HepG2 (cell line): ENCODE measurements at regions of chr17 and their contacts with region 1.

Region 1: DNA sequence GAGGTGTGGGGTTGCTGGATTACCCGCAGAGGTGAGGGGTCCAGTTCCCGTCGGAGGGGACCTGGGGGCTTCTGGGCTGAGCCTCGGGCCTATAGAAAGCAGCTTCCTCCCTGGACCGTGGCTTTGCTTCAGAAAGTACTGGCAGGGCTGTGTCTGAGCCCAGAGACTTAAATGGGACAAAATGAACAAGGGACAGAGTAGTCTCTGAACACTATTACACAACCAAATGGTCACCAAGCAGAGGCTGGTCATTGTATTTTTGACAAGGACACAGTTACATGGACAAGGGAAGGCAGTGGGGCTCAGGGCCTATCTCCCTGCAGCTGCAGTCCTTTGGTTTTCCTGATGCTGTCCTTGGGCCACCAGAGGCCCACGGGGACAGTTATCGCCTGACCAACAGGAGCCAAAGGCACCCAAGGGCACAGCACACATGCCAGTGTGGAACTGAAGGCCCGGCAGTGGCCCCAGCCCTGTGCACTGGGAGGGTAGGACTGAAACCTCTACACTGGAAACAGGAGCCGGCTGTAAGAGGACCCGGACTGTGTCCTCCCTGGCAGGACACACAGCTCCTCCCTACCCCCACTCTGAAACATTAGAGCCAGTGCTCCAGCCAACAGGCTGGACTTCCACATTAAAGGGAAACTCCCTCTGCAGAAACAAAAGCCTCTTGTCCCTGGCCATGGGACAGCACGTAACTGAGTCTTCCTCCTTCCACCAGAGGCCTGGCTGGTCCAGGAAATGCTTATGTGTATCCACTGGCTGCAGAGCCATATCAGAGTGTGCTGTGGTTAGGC is 26.0 kb upstream of the ERN1 start:
- DNase-seq: peak; percentile 98
- ATAC-seq: peak; percentile 94
- H3K4me3 ChIP-seq: peak overlapping the region; percentile 4 to 64 (median 6); a peak in 4 of 6 replicates
- H3K27ac ChIP-seq: peak overlapping the region; percentile 88
- H3K4me1 ChIP-seq: peaks cover 79% of the 10 kb centered on the region
- H3K27me3 ChIP-seq: no peaks in the 10 kb centered on the region
- CTCF ChIP-seq: peak; percentile 45
- EP300 ChIP-seq: peak in 1 of 2 experiments; percentile 59; a peak in 2 of 4 replicates
- POLR2A ChIP-seq: peak; percentile 70 to 86
- RAD21 ChIP-seq: peak; percentile 67; the same call in 1 of the 2 replicates

Region 2: DNA sequence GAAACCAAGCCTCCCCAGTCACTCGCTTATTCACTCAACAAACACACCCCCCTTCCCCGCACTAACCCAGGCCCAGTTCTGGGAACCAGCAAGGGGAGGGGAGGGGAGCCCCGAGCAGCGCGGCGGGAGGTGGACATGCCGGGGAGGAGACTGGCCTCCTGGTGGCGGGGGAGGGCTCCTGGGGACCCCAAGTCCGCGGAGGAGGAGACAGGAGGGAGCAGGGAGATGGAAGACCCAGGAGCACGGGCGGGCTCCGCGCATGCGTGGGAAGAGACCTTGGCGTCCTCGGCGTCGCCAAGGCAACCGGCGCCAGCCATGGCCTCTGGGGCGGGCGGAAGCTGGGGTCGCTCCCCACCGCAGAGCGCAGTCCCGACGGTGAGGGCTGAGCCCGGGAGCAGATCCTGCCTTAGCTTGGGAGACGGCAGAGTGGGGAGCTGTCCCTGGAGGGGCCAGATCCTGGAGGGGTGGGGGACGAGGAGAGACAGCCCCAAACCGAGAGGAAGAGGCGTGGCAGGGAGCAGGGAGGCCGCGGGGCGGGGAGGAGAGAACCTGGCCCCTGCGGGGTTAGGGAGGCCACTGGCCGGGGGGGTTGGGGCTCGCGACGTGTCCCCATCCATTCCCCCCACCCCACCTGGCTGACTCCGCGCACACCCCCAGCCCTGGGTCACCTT is 157.8 kb before region 1 on chr17 and contains the start of gene PRR29:
- CTCF ChIA-PET with region 1: no interaction called
- POLR2A ChIA-PET with region 1: no interaction called
- in situ Hi-C with region 1: no loop called
- intact Hi-C with region 1: no loop called
- DNase-seq: peak; percentile 66
- ATAC-seq: peak; percentile 76
- H3K4me3 ChIP-seq: peak within 1 kb of the TSS; percentile 67 to 87 (median 79)
- H3K27ac ChIP-seq: no peak within 1 kb of the TSS
- H3K4me1 ChIP-seq: peaks cover 49% of the 10 kb centered on the region
- H3K27me3 ChIP-seq: peaks cover 10 to 37% of the 10 kb centered on the region in 2 experiments; a peak in 4 of 5 replicates
- CTCF ChIP-seq: 0 out of 2 replicates have a peak, but pooled peaks have one; percentile 11
- EP300 ChIP-seq: no peak
- POLR2A ChIP-seq: no peak
- RAD21 ChIP-seq: no peak
- total RNA-seq, gene PRR29: 0.07 and 0.11 TPM in 2 replicates

Region 3: DNA sequence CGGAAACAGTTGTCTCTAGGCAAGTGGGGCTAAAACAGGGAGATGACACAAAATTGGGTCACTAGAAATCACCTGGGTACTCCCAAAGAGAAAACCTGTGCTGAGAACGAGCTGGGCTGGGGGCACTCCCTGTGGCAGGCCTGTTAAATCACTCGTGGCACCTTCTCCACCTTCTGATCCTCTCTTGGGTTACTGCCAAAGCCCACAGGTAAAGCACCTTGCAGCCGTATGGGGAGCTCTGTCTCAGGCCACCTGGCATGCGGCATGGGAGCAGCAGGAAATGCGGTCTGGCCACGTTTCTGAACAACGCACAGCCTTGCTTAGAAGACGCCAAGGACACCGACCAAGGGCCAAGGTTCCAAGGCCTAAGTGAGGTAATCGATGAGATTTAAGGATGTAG is 114.0 kb before region 1 on chr17:
- CTCF ChIA-PET with region 1: no interaction called
- POLR2A ChIA-PET with region 1: no interaction called
- in situ Hi-C with region 1: no loop called
- intact Hi-C with region 1: no loop called
- DNase-seq: no peak
- ATAC-seq: no peak
- H3K4me3 ChIP-seq: no peak overlapping the region
- H3K27ac ChIP-seq: no peak overlapping the region
- H3K4me1 ChIP-seq: no peaks in the 10 kb centered on the region
- H3K27me3 ChIP-seq: no peaks in the 10 kb centered on the region
- CTCF ChIP-seq: no peak
- EP300 ChIP-seq: no peak
- POLR2A ChIP-seq: no peak
- RAD21 ChIP-seq: no peak

Region 4: DNA sequence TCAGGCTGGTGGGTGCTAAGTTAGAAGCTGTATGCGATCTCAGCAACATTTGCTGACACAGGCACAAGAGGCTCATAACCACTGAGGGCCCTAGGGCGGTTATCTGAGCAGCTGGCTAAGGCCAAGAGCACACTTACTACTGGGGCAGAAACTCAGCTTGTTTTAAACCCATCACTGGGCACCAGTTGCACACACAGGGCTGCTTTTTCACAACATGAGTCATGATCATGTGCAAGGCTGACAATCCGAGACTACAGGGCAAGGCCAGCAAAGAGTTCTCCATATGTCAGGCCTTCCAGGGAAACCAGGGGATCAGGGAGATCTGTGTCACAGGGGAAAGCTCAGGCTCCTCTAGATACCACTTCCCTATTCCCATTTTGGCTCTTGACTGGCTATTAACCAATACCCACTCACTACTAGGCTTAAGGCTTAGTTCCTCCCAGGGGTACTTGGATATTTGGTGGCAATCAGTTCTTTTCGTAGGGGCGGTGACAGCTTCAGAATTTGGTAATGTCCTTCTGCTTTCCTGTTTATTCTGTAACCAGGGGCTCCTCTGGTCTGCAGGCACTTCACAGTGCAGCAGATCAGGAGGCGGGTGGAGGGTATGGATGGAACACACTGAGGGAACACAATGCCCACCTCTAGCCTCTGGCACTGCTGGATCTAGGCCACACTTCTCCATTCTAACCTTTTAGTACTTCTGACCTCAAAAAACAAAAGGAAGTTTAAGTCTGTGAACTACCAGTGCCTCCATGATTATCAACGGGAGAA is 18.9 kb after region 1 on chr17:
- CTCF ChIA-PET with region 1: no interaction called
- POLR2A ChIA-PET with region 1: interaction called, 21 read pairs
- in situ Hi-C with region 1: no loop called
- intact Hi-C with region 1: loop called (anchors 2 kb)
- DNase-seq: no peak
- ATAC-seq: no peak
- H3K4me3 ChIP-seq: no peak overlapping the region
- H3K27ac ChIP-seq: no peak overlapping the region
- H3K4me1 ChIP-seq: peaks cover 37% of the 10 kb centered on the region
- H3K27me3 ChIP-seq: no peaks in the 10 kb centered on the region
- CTCF ChIP-seq: no peak
- EP300 ChIP-seq: no peak
- POLR2A ChIP-seq: no peak
- RAD21 ChIP-seq: no peak

Region 5: GRCh38 chr17:64496786-64497564 is 341.0 kb after region 1 on chr17 and contains the start of gene POLG2:
- CTCF ChIA-PET with region 1: no interaction called
- POLR2A ChIA-PET with region 1: no interaction called
- in situ Hi-C with region 1: no loop called
- intact Hi-C with region 1: loop called (anchors 10 kb)
- DNase-seq: peak; percentile 92
- ATAC-seq: peak; percentile 86
- H3K4me3 ChIP-seq: peak within 1 kb of the TSS; percentile 65 to 90 (median 68)
- H3K27ac ChIP-seq: peak within 1 kb of the TSS; percentile 74
- H3K4me1 ChIP-seq: peaks cover 73% of the 10 kb centered on the region
- H3K27me3 ChIP-seq: no peaks in the 10 kb centered on the region; a peak in 1 of 5 replicates
- CTCF ChIP-seq: peak; percentile 79
- EP300 ChIP-seq: peak in 1 of 2 experiments; percentile 69; a peak in 1 of 4 replicates
- POLR2A ChIP-seq: peak; percentile 90 to 98
- RAD21 ChIP-seq: peak; percentile 59
- total RNA-seq, gene POLG2: 16.2 and 25.5 TPM in 2 replicates

Region 6: DNA sequence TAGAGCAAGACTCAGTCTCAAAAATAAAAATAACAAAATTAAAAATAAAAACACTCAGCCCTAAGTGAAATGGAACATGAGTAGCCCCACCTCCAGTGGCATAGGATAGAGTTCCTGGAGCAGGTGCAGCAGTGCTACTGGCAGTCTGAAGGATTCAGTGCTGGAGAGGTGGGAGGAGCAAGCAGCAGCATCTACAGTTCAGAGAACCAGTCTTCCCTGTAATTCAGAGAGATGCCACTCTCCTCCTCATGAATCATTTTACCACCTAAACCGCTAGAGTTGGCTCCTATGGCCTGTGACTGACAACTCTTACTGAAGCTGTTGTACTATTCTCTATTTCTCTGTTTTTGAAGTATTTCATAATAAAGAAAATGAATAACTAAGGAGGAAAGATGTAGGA is 562.1 kb after region 1 on chr17:
- CTCF ChIA-PET with region 1: no interaction called
- POLR2A ChIA-PET with region 1: no interaction called
- in situ Hi-C with region 1: no loop called
- intact Hi-C with region 1: loop called (anchors 5 kb)
- DNase-seq: no peak
- ATAC-seq: no peak
- H3K4me3 ChIP-seq: no peak overlapping the region
- H3K27ac ChIP-seq: no peak overlapping the region
- H3K4me1 ChIP-seq: peaks cover 26% of the 10 kb centered on the region
- H3K27me3 ChIP-seq: no peaks in the 10 kb centered on the region
- CTCF ChIP-seq: no peak
- EP300 ChIP-seq: no peak
- POLR2A ChIP-seq: no peak
- RAD21 ChIP-seq: no peak